B cell (primary cell): ENCODE measurements at regions of chr2 and their contacts with region 1.

Region 1: GRCh38 chr2:63841254-63842022 is at the start of gene UGP2:
- DNase-seq: peak; percentile 88
- ATAC-seq: peak; percentile 60
- H3K4me3 ChIP-seq: peak within 1 kb of the TSS; percentile 86 to 98 (median 96)
- H3K4me3 Mint-ChIP-seq: peak within 1 kb of the TSS; percentile 98
- H3K27ac ChIP-seq: peak within 1 kb of the TSS; percentile 82 to 91
- H3K27ac Mint-ChIP-seq: peak within 1 kb of the TSS; percentile 95
- H3K4me1 ChIP-seq: peaks cover 19 to 20% of the 10 kb centered on the region in 2 donors
- H3K4me1 Mint-ChIP-seq: peaks cover 51% of the 10 kb centered on the region
- H3K27me3 ChIP-seq: no peaks in the 10 kb centered on the region
- H3K27me3 Mint-ChIP-seq: no peaks in the 10 kb centered on the region
- CTCF ChIP-seq: no peak
- total RNA-seq, gene UGP2: 61.5 and 68.8 TPM in 2 replicates

Region 2: GRCh38 chr2:61854474-61855182 is 1986.8 kb before region 1 on chr2:
- CTCF ChIA-PET with region 1: no interaction called
- POLR2A ChIA-PET with region 1: no interaction called
- intact Hi-C with region 1: loop called (anchors 2 kb)
- DNase-seq: peak; percentile 96
- ATAC-seq: peak; percentile 83
- H3K4me3 ChIP-seq: peak overlapping the region; percentile 92 to 99 (median 98)
- H3K4me3 Mint-ChIP-seq: peak overlapping the region; percentile 94
- H3K27ac ChIP-seq: peak overlapping the region; percentile 56 to 68
- H3K27ac Mint-ChIP-seq: peak overlapping the region; percentile 92
- H3K4me1 ChIP-seq: peaks cover 11 to 16% of the 10 kb centered on the region in 2 donors
- H3K4me1 Mint-ChIP-seq: peaks cover 23% of the 10 kb centered on the region
- H3K27me3 ChIP-seq: no peaks in the 10 kb centered on the region
- H3K27me3 Mint-ChIP-seq: no peaks in the 10 kb centered on the region
- CTCF ChIP-seq: no peak

Region 3: GRCh38 chr2:63588385-63589147 is 252.9 kb before region 1 on chr2 and contains the starts of genes MDH1 and WDPCP:
- CTCF ChIA-PET with region 1: interaction called, 6 read pairs
- POLR2A ChIA-PET with region 1: interaction called, 14 read pairs
- intact Hi-C with region 1: loop called (anchors 1 kb)
- DNase-seq: peak; percentile 98
- ATAC-seq: peak; percentile 84
- H3K4me3 ChIP-seq: peak within 1 kb of the TSS; percentile 93 to 98 (median 94)
- H3K4me3 Mint-ChIP-seq: peak within 1 kb of the TSS; percentile 91
- H3K27ac ChIP-seq: peak within 1 kb of the TSS; percentile 93 to 94
- H3K27ac Mint-ChIP-seq: peak within 1 kb of the TSS; percentile 93
- H3K4me1 ChIP-seq: peaks cover 14 to 19% of the 10 kb centered on the region in 2 donors
- H3K4me1 Mint-ChIP-seq: peaks cover 37% of the 10 kb centered on the region
- H3K27me3 ChIP-seq: no peaks in the 10 kb centered on the region
- H3K27me3 Mint-ChIP-seq: no peaks in the 10 kb centered on the region
- CTCF ChIP-seq: no peak
- total RNA-seq, gene MDH1: 87.8 and 95.6 TPM in 2 replicates
- total RNA-seq, gene WDPCP: 22.8 and 31.4 TPM in 2 replicates

Region 4: DNA sequence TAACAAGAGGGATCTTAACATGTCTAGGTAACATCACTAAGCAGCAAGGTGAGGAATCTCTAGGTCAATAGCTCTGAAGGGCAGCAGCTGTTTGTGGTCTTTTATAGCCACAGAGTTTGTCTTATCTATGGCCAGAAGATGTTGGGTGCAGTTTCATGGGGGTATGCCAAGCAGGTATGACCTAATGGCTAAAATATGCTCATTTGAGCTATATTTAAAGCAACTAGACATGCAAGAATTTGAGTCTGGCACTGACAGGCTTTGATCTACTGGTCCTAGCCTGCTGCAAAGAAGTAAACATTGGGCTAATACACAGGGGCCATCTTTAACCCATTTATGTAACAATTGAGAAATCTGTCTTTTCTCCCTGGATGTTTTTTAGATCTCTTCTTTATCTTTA is 13.7 kb before region 1 on chr2:
- CTCF ChIA-PET with region 1: no interaction called
- POLR2A ChIA-PET with region 1: no interaction called
- intact Hi-C with region 1: no loop called
- DNase-seq: no peak
- ATAC-seq: no peak
- H3K4me3 ChIP-seq: no peak overlapping the region
- H3K4me3 Mint-ChIP-seq: no peak overlapping the region
- H3K27ac ChIP-seq: no peak overlapping the region
- H3K27ac Mint-ChIP-seq: no peak overlapping the region
- H3K4me1 ChIP-seq: no peaks in the 10 kb centered on the region
- H3K4me1 Mint-ChIP-seq: peaks cover 3% of the 10 kb centered on the region
- H3K27me3 ChIP-seq: no peaks in the 10 kb centered on the region
- H3K27me3 Mint-ChIP-seq: peaks cover 8% of the 10 kb centered on the region
- CTCF ChIP-seq: no peak

Region 5: DNA sequence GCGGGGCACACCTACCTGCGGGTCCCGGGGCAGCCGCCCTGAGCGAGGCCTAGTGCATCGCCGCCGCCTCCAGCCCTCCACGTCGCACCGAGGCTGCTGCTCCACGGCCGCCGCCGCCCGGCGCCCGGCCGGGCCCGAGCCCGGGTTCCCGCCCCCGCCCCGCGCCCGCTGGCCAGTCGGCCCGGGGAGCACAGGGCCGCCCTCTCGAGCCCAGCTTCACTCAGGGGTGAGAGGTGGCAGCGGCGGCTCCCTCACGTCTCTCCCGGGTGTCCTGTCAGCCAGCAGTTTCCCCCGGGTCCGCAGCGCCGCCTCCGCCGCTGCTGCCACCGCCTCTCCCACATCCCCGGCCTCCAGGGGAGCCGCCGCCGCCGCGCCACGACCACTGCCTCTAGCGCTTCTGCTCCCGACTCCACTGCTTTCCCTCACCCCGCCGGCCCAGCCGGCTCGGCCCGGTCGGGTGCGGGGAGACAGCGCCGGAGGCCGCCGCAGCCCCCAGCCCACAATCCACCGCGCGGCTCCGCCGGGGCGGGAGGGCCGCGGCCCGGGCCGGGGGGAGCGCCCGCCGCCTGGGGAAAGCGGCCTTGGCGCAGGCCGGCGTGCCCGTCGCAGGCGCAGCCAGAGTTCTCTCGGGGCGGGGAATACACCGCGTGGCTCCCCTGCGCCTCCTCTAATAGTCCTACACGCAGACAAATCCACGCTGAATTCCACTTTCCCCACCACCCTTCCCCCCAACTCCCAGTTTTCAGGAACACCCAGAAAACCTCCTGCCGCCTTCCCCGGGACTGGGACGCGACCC is 177.7 kb after region 1 on chr2 and contains the start of gene VPS54:
- CTCF ChIA-PET with region 1: no interaction called
- POLR2A ChIA-PET with region 1: interaction called, 3 read pairs
- intact Hi-C with region 1: loop called (anchors 5 kb)
- DNase-seq: peak; percentile 79
- ATAC-seq: peak; percentile 79
- H3K4me3 ChIP-seq: peak within 1 kb of the TSS; percentile 44 to 93 (median 77)
- H3K4me3 Mint-ChIP-seq: peak within 1 kb of the TSS; percentile 98
- H3K27ac ChIP-seq: peak within 1 kb of the TSS; percentile 52 to 77
- H3K27ac Mint-ChIP-seq: peak within 1 kb of the TSS; percentile 97
- H3K4me1 ChIP-seq: peaks cover 13 to 20% of the 10 kb centered on the region in 2 donors
- H3K4me1 Mint-ChIP-seq: peaks cover 34% of the 10 kb centered on the region
- H3K27me3 ChIP-seq: no peaks in the 10 kb centered on the region
- H3K27me3 Mint-ChIP-seq: no peaks in the 10 kb centered on the region
- CTCF ChIP-seq: no peak
- total RNA-seq, gene VPS54: 13.2 and 14.4 TPM in 2 replicates

Region 6: DNA sequence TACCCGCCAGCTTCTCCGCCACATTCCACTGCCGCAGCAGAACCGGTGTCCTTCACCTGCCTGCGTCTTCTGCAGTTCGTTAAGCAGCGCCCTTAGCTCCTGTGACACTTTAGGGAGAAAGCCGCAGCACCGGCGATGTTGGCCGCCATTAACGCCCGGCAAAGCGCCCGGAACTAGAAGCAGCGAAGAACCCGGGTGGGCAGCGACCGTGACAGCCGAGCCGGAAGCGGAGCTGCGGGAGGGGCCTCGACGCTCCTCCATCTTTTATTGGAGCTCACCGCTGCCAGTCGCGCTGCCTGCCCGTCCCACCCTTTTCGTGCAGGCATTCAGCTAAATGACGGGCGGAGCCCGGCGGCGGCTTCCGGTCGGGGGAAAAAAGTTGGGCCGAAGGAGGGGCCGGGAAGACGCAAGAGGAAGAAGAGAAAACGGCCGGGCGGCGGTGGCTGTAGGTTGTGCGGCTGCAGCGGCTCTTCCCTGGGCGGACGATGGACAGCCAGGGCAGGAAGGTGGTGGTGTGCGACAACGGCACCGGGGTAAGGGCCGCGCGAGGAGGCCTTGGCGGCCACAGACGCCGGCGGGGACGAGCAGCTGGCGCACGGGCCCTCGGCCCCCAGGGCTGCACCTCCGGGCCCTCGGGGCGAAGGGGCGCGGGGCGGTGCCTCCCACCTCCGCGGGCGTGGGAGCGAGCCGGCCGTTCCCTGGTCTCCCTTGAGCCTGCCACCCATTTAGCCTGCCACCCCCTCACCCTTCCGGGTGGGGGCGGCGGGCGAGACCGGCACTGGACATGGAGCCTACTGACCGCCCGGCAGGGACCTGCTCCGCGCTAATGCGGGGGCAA is 1386.2 kb after region 1 on chr2 and contains the start of gene ACTR2:
- CTCF ChIA-PET with region 1: no interaction called
- POLR2A ChIA-PET with region 1: no interaction called
- intact Hi-C with region 1: loop called (anchors 5 kb)
- DNase-seq: peak; percentile 97
- ATAC-seq: peak; percentile 90
- H3K4me3 ChIP-seq: peak within 1 kb of the TSS; percentile 86 to 100 (median 98)
- H3K4me3 Mint-ChIP-seq: peak within 1 kb of the TSS; percentile 93
- H3K27ac ChIP-seq: peak within 1 kb of the TSS; percentile 97
- H3K27ac Mint-ChIP-seq: peak within 1 kb of the TSS; percentile 100
- H3K4me1 ChIP-seq: peaks cover 39 to 44% of the 10 kb centered on the region in 2 donors
- H3K4me1 Mint-ChIP-seq: peaks cover 37% of the 10 kb centered on the region
- H3K27me3 ChIP-seq: no peaks in the 10 kb centered on the region
- H3K27me3 Mint-ChIP-seq: no peaks in the 10 kb centered on the region
- CTCF ChIP-seq: no peak
- total RNA-seq, gene ACTR2: 270 and 284 TPM in 2 replicates